Mucosa of descending colon (tissue), 3 donors: ENCODE measurements at regions of chr5 and their contacts with region 1.

Region 1: GRCh38 chr5:61431923-61432620 is 100.0 kb downstream of the ZSWIM6 start:
- DNase-seq: no peak
- ATAC-seq: peak; percentile 13
- H3K4me3 ChIP-seq: no peak overlapping the region
- H3K4me1 ChIP-seq: peaks cover 6% of the 10 kb centered on the region
- CTCF ChIP-seq: no peak

Region 2: DNA sequence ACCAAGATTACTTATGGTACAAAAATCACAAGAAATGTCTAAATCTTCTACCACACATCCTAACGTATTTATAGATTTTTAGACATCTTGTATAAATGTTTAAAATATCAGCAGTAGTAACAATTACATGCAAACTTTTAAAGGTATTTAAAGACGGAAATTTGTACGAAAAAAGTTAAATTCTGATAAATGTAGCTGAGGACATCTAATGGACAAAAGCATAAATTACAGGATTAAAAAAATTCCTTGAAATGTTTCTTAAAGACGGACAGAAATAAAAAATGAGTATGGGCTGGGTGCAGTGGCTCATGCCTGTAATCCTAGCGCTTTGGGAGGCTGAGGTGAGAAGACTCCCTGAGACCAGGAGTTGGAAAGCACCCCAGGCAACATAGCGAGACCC is 503.0 kb before region 1 on chr5:
- intact Hi-C with region 1: loop called in 1 of 2 experiments (anchors 10 kb)
- DNase-seq: no peak
- ATAC-seq: no peak
- H3K4me3 ChIP-seq: no peak overlapping the region
- H3K4me1 ChIP-seq: no peaks in the 10 kb centered on the region
- CTCF ChIP-seq: no peak

Region 3: DNA sequence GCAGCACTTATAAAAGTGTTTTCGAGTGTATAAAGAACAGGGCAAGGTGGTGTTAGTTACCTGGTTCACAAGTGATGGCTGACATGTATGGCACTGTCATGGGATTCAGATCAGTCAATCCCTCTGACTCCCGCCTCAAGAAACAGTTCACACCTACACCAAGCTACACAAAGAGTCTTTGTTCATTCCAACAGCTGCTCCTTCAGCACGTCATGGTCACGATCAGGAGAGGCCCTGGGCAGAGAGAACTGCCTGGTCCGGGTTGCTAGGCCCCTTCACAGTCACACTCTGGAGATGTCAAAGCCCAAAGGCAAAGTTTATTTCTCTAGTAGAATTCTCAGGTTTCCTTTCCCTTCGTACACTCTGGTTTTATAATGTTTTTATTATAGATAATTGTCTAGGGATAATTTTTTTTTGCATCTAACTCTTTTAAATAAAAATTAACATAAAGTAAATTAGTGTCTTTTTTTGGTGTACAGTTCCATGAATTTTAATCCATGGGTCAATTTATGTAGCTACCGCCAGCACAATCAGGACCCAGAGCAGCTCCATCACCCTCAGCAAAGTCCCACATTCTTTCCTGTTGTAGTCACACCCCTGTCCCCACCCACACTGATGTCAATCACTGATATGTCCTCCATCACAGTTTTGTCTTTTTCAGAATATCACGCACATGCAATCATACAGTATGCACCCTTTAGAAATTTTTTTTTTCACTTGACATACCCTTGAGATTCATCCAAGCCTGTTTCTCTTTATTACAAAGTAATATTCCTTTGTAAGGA is 326.8 kb after region 1 on chr5:
- intact Hi-C with region 1: no loop called
- DNase-seq: no peak
- ATAC-seq: peak; percentile 28
- H3K4me3 ChIP-seq: no peak overlapping the region
- H3K4me1 ChIP-seq: no peaks in the 10 kb centered on the region
- CTCF ChIP-seq: no peak